HCT116 (cell line): ENCODE measurements at regions of chr15 and their contacts with region 1.

Region 1: DNA sequence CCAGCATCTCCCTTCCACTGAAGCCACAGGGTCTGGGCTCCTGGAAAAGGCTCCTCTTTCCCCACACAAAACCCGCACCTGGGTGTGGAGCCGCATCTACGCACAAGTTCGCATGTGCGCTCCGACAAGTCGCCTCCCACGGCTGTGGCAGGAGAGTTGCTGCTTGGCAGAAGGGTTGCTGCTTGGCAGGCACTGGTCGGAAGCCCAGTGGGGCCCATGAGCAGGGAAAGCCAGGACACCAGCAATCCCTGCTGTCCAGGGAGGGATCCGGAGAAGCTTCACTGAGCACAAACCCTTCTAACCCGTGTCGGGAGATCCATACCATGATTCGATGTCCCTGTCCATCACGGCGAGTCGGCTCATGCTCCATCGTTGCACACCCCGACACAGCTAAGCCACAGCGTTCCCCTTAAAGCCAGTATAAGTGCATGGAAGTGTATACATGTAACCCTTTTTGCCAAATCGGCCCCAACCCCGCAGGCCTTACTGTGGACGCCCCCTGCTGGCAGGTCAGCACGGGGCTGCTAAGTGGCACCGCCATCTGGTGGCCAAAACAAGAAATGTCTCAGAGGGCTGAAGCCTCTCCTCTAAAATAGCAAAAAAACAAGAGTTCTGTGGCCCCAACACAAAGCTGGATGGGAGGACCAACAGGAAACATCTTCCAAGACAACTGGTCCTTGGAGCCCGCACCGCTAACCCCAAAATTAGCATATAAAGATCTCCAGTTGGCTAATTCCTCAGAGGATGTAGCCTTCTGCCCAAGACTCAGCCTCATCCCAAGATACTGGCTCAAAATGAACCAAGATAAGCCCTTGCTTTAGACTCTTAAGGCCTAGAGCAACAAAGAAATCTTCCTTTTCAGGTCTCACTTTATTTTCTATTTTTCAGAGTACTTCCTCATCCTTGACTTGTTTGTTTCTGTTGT is 8.3 kb downstream of the ANKRD63 start:
- DNase-seq: peak; percentile 56
- ATAC-seq: peak; percentile 63
- H3K4me3 ChIP-seq: no peak overlapping the region
- H3K27ac ChIP-seq: no peak overlapping the region
- H3K4me1 ChIP-seq: peaks cover 0 to 3% of the 10 kb centered on the region in 2 experiments; a peak in 1 of 4 replicates
- H3K27me3 ChIP-seq: no peaks in the 10 kb centered on the region
- CTCF ChIP-seq: peak; percentile 100
- POLR2A ChIP-seq: no peak
- RAD21 ChIP-seq: peak; percentile 97

Region 2: DNA sequence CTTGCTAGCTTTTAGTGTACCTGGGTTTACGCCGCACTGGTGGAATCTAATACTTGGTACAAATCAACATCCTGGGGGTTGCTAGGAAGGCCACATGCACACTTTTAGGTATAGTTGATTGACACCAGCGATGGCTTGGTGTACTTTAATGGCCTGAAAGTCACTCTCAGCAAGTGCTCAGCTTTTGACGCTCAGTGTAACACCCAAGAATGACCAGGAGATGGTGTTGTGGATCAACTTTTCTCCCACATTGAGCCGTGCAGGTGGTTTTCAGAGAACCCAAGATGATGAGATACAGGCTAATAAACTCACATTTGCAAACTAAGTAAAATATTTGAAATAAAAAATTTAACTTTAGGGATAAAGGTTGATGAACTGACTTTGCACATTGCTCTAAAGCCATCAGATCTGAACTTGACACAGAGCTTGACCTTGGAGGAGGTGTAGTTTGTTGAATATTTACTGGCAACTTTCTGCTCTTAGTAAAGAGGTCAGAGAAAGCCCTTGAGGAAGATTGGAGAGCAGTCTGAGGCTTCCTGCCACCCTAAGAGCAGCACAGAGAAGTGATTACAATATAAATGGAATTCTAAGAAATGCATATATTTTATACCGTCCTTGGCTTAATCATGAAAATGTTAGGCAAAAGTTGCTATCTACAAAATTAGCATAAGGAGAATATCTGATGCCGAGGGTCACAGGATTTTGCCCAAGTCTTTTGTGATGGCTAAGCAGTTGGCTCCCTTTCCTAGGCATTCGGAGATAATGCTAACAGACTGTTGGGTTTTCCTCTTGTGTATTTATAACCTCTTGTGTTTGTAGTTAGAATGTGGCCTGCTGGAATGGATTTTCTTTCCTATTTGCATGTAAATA is 1566.6 kb before region 1 on chr15:
- CTCF ChIA-PET with region 1: no interaction called
- POLR2A ChIA-PET with region 1: no interaction called
- RAD21 ChIA-PET with region 1: no interaction called
- intact Hi-C with region 1: loop called (anchors 5 kb)
- DNase-seq: peak; percentile 53
- ATAC-seq: peak; percentile 95
- H3K4me3 ChIP-seq: no peak overlapping the region
- H3K27ac ChIP-seq: no peak overlapping the region
- H3K4me1 ChIP-seq: no peaks in the 10 kb centered on the region
- H3K27me3 ChIP-seq: peaks cover 20% of the 10 kb centered on the region
- CTCF ChIP-seq: peak; percentile 40 to 70 (median 67); a peak in 5 of 6 replicates
- POLR2A ChIP-seq: no peak
- RAD21 ChIP-seq: peak; percentile 69

Region 3: DNA sequence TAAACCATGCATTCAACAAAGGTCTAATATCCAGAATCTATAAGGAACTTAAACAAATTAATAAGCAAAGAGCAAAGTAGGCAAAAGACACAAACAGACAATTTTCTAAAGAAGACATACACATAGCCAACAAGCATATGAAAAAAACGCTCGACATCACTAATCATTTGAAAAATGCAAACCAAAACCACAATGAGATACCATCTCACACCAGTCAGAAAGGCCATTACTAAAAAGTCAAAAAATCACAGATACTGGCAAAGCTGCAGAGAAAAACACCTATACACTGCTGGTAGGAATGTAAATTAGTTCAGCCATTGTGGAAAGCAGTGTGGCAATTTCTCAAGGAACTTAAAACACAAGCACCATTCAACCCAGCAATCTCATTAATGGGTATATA is 545.8 kb before region 1 on chr15:
- CTCF ChIA-PET with region 1: no interaction called
- POLR2A ChIA-PET with region 1: no interaction called
- RAD21 ChIA-PET with region 1: no interaction called
- intact Hi-C with region 1: no loop called
- DNase-seq: no peak
- ATAC-seq: no peak
- H3K4me3 ChIP-seq: no peak overlapping the region
- H3K27ac ChIP-seq: no peak overlapping the region
- H3K4me1 ChIP-seq: no peaks in the 10 kb centered on the region
- H3K27me3 ChIP-seq: no peaks in the 10 kb centered on the region
- CTCF ChIP-seq: no peak
- POLR2A ChIP-seq: no peak
- RAD21 ChIP-seq: no peak

Region 4: GRCh38 chr15:40044717-40045571 is 229.7 kb before region 1 on chr15:
- CTCF ChIA-PET with region 1: interaction called, 64 read pairs
- POLR2A ChIA-PET with region 1: no interaction called
- RAD21 ChIA-PET with region 1: interaction called, 3 read pairs
- intact Hi-C with region 1: loop called (anchors 1 kb)
- DNase-seq: peak; percentile 46
- ATAC-seq: peak; percentile 100
- H3K4me3 ChIP-seq: peak overlapping the region; percentile 14 to 21
- H3K27ac ChIP-seq: no peak overlapping the region
- H3K4me1 ChIP-seq: peaks cover 21 to 43% of the 10 kb centered on the region in 2 experiments
- H3K27me3 ChIP-seq: no peaks in the 10 kb centered on the region
- CTCF ChIP-seq: peak; percentile 84 to 97 (median 96)
- POLR2A ChIP-seq: no peak
- RAD21 ChIP-seq: peak; percentile 98

Region 5: DNA sequence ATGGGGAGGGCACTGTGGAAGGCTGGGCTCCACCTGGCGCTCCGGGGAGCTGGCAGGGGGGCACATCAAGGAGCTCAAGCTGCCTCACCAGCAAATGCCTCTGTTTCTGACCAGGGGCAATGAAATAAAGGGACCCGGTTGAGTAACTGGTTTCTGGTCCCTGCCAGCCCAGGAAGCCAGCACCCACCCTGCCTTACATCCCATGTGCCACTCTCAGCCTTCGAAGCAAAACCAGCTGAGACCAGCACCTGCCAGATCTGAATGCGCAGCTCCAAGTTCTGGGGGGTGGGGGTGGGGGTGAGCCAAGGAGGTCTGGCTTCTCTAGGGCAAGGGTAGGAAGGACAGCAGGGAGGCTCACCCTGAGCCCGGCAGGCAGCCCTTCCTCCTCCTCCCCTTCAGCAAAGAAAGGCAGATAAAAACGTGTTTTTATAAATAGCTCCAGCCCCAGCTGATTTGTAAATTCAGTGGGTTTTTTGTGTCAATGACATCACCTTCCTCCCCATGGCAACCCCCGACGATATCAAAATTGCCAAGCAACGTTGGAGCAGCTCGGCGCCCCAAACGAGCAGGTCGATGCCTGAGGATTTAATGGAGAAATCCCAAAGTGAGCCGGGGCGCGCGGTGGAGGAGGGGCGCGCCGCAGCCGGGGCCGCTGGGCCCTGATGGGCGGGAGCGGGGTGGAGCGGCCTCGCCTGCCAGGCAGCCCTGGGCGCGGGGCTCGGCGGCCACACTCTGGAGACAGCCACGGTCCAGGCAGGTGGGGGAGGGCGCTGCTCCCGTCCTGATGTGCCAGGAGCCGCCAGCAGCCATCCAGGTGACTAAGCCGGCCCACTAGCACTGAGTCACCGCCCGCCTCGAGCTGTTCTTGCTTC is 35.8 kb before region 1 on chr15 and contains the start of gene PAK6:
- CTCF ChIA-PET with region 1: interaction called, 18 read pairs
- POLR2A ChIA-PET with region 1: no interaction called
- RAD21 ChIA-PET with region 1: no interaction called
- intact Hi-C with region 1: no loop called
- DNase-seq: peak; percentile 51
- ATAC-seq: peak; percentile 94
- H3K4me3 ChIP-seq: peak within 1 kb of the TSS; percentile 21 to 53
- H3K27ac ChIP-seq: peak within 1 kb of the TSS; percentile 12; the same call in 1 of the 2 replicates
- H3K4me1 ChIP-seq: peaks cover 10 to 46% of the 10 kb centered on the region in 2 experiments
- H3K27me3 ChIP-seq: no peaks in the 10 kb centered on the region
- CTCF ChIP-seq: no peak
- POLR2A ChIP-seq: no peak
- RAD21 ChIP-seq: no peak
- total RNA-seq, gene PAK6: 19.9 TPM

Region 6: DNA sequence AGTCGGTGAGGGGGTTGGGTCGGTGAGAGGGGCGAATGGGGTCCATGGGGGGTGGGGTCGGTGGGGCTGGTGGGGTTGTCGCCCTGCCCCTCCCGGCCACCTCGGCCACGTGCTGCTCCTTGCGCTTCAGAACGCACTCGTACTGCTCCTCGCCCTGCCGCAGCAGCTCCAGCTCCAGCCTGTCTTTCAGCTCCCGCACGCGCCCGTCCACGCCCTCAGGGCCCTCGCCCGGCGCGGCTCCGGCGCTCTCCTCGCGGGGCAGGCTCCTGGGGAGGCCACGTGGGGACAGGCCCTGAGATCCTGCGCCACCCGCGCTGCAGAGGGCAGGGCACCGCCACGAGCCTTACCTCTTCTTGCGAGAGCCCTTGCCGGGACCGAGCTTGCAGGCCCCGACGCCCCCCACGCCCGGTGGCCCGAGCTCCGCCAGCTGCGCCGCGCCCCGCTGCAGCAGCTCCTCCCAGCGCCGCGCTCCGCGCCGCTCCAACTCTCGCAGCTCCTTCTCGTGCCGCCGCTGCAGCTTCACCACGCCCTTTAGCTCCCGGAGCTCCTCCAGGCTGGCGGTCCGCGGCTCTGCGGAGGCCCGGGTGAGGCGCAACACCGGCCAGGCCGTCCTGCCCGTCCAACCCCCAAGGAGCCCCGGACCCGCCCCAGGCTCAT is 16.4 kb after region 1 on chr15:
- CTCF ChIA-PET with region 1: interaction called, 24 read pairs
- POLR2A ChIA-PET with region 1: no interaction called
- RAD21 ChIA-PET with region 1: interaction called in 1 of 2 experiments, 3 read pairs
- intact Hi-C with region 1: no loop called
- DNase-seq: no peak
- ATAC-seq: peak; percentile 82
- H3K4me3 ChIP-seq: peak overlapping the region; percentile 30 to 49
- H3K27ac ChIP-seq: peak overlapping the region; percentile 45; the same call in 1 of the 2 replicates
- H3K4me1 ChIP-seq: peaks cover 46 to 51% of the 10 kb centered on the region in 2 experiments
- H3K27me3 ChIP-seq: no peaks in the 10 kb centered on the region
- CTCF ChIP-seq: no peak
- POLR2A ChIP-seq: peak; percentile 39
- RAD21 ChIP-seq: no peak

Region 7: GRCh38 chr15:40323239-40323952 is 48.8 kb after region 1 on chr15 and contains the start of gene INAFM2:
- CTCF ChIA-PET with region 1: interaction called, 11 read pairs
- POLR2A ChIA-PET with region 1: no interaction called
- RAD21 ChIA-PET with region 1: no interaction called
- intact Hi-C with region 1: no loop called
- DNase-seq: peak; percentile 81
- ATAC-seq: peak; percentile 92
- H3K4me3 ChIP-seq: peak within 1 kb of the TSS; percentile 47 to 58
- H3K27ac ChIP-seq: peak within 1 kb of the TSS; percentile 39; the same call in 1 of the 2 replicates
- H3K4me1 ChIP-seq: peaks cover 4 to 18% of the 10 kb centered on the region in 2 experiments; a peak in 3 of 4 replicates
- H3K27me3 ChIP-seq: no peaks in the 10 kb centered on the region
- CTCF ChIP-seq: peak in 2 of 3 experiments; percentile 27 to 45; a peak in 4 of 6 replicates
- POLR2A ChIP-seq: no peak
- RAD21 ChIP-seq: no peak
- total RNA-seq, gene INAFM2: 8.8 TPM

Region 8: GRCh38 chr15:40405501-40406381 is 131.1 kb after region 1 on chr15 and contains the start of gene IVD:
- CTCF ChIA-PET with region 1: no interaction called
- POLR2A ChIA-PET with region 1: no interaction called
- RAD21 ChIA-PET with region 1: no interaction called
- intact Hi-C with region 1: no loop called
- DNase-seq: peak; percentile 88
- ATAC-seq: peak; percentile 99
- H3K4me3 ChIP-seq: peak within 1 kb of the TSS; percentile 83 to 97
- H3K27ac ChIP-seq: peak within 1 kb of the TSS; percentile 65
- H3K4me1 ChIP-seq: peaks cover 4 to 16% of the 10 kb centered on the region in 2 experiments; a peak in 3 of 4 replicates
- H3K27me3 ChIP-seq: no peaks in the 10 kb centered on the region
- CTCF ChIP-seq: no peak
- POLR2A ChIP-seq: peak; percentile 65
- RAD21 ChIP-seq: no peak
- total RNA-seq, gene IVD: 65.6 TPM

Region 9: GRCh38 chr15:40421246-40422157 is 146.9 kb after region 1 on chr15:
- CTCF ChIA-PET with region 1: interaction called, 31 read pairs
- POLR2A ChIA-PET with region 1: no interaction called
- RAD21 ChIA-PET with region 1: interaction called in 1 of 2 experiments, 4 read pairs
- intact Hi-C with region 1: loop called (anchors 1 kb)
- DNase-seq: peak; percentile 32
- ATAC-seq: peak; percentile 94
- H3K4me3 ChIP-seq: no peak overlapping the region
- H3K27ac ChIP-seq: peak overlapping the region; percentile 55; the same call in 1 of the 2 replicates
- H3K4me1 ChIP-seq: peaks cover 16 to 22% of the 10 kb centered on the region in 2 experiments
- H3K27me3 ChIP-seq: no peaks in the 10 kb centered on the region
- CTCF ChIP-seq: peak; percentile 81 to 88 (median 86); a peak in 5 of 6 replicates
- POLR2A ChIP-seq: no peak
- RAD21 ChIP-seq: peak; percentile 91